ENCODE measurements at regions of chr18 and their contacts with region 1.

Region 1: DNA sequence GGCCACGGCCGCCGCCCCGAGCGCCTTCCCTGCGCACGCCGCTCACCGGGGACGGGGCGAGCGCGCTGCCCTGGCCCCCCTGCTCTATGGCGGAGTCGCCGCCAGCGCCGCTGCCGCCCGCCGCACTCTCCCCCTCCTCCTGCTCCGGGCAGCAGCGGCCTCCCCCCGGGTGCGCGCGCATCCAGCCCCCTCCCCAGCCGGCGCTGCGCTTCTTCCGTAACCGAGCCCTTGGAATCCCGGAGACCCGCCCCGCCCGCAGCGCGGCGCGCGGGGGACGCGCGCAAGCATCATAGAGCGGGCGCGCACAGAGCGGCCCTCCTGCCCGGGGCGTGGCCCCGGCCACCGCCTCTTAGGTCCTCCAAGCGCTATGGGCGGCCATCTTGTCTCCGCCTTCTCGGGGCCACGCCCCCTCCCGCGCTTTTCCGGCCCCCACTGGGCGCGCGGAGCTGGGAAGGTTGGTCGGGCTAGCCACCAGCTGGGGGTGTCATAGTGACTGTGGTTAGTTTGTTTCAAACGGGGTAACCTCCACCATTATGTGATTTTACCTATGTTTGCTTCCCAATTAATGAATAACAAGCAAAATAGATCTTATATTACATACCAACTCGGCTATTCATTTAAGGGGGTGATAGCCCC is at the start of gene MBD2:
- DNase-seq: peak; percentile 94
- H3K4me3 Mint-ChIP-seq: peak within 1 kb of the TSS; percentile 98
- H3K27ac Mint-ChIP-seq: peak within 1 kb of the TSS; percentile 98
- H3K4me1 Mint-ChIP-seq: peaks cover 43% of the 10 kb centered on the region
- H3K27me3 Mint-ChIP-seq: no peaks in the 10 kb centered on the region
- total RNA-seq, gene MBD2: 223 and 242 TPM in 2 replicates

Region 2: GRCh38 chr18:54173980-54174630 is 50.4 kb before region 1 on chr18:
- intact Hi-C with region 1: loop called (anchors 1 kb)
- DNase-seq: no peak
- H3K4me3 Mint-ChIP-seq: peak overlapping the region; percentile 49
- H3K27ac Mint-ChIP-seq: peak overlapping the region; percentile 96
- H3K4me1 Mint-ChIP-seq: peaks cover 69% of the 10 kb centered on the region
- H3K27me3 Mint-ChIP-seq: no peaks in the 10 kb centered on the region

Region 3: GRCh38 chr18:54209471-54210180 is 14.9 kb before region 1 on chr18:
- intact Hi-C with region 1: loop called (anchors 1 kb)
- DNase-seq: no peak
- H3K4me3 Mint-ChIP-seq: peak overlapping the region; percentile 5
- H3K27ac Mint-ChIP-seq: peak overlapping the region; percentile 85
- H3K4me1 Mint-ChIP-seq: peaks cover 70% of the 10 kb centered on the region
- H3K27me3 Mint-ChIP-seq: no peaks in the 10 kb centered on the region

Region 4: DNA sequence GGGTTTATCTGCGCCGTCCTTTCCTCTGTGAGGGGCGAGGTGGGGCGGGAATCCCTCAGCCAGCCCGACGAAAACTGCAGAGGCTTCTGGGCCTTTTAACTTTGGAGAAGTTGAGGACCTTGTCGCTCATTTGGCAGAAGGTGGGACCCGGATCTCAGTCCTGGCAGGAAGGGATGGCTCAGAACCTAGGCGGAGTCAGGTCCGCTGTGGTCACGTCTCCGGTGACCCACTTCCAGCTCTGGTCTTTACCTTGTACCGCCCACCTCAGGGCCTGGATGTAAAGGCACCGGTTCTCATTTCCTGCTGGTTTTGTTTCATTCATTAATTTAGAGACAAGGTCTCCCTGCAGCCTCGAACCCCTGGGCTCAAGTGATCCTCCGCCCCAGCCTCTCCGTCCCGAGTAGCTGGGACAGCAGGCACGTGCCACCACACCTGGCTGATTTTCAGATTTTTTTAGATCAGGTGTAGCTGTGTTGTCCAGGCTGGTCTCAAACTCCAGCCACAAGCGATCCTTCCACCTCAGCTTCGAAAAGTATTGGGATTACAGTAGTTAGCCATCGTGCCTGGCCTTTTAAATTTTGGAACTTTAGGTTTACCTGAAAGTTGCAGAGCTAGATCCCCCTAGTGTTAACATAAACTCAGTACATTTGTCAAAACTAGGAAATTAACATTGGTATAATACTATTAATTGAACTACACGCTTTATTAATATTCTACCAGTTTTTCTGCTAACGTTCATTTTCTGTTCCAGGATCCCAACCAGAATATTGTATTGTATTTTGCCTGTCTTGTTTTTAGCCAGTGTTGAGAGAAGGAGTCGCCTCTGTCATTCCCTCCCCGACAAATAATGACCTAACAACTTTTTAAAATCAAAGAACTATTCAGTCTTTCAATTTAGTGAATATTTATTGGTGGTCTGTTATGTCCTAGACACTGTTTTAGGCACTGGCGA is 45.7 kb after region 1 on chr18:
- intact Hi-C with region 1: loop called (anchors 1 kb)
- DNase-seq: peak; percentile 54
- H3K4me3 Mint-ChIP-seq: peak overlapping the region; percentile 81
- H3K27ac Mint-ChIP-seq: peak overlapping the region; percentile 96
- H3K4me1 Mint-ChIP-seq: peaks cover 44% of the 10 kb centered on the region
- H3K27me3 Mint-ChIP-seq: no peaks in the 10 kb centered on the region

Region 5: DNA sequence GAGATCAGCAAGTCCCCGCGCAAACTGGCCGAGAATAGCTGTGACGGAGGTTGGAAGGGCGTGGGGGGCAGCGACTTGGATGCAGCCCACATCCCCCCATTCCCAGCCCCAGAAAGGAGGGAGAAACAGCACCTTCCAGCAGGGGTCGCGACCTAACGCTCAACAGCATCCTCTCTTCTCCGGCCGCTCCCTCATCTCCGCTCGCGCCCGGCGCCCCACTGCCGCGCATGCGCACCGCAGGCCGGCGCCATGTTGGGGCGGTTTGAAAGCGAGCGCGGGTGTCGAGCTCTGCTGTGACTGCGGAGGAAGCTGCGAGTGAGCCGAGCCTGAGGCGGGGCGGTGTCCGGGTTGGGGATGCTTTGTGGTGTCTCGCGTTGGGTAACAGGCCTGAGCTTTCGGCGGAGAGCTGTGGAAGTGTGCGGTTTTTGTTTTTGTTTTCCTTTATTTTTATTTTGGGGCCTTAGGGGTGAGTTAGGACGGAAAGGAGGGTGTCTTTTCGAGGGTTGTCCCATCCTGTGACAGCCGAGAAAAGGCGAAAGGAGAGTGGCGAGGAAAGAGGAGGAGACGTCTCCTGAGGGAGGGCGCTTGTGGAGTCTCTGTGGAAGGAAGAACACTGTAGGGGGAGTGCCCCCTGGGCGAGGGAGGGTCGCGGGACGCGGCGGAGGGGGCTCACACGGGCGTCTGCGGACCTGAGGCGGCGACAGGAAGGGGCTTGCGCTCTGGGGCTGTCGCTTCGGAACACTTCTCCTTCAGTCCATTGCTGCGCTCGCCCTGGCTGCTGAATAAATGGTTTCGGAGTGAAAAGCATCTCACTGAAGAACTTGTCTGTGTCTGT is 133.4 kb after region 1 on chr18 and contains the starts of genes C18orf54 and STARD6:
- intact Hi-C with region 1: loop called (anchors 1 kb)
- DNase-seq: peak; percentile 93
- H3K4me3 Mint-ChIP-seq: peak within 1 kb of the TSS; percentile 98
- H3K27ac Mint-ChIP-seq: peak within 1 kb of the TSS; percentile 97
- H3K4me1 Mint-ChIP-seq: peaks cover 34% of the 10 kb centered on the region
- H3K27me3 Mint-ChIP-seq: no peaks in the 10 kb centered on the region
- total RNA-seq, gene C18orf54: 10.4 and 10.7 TPM in 2 replicates
- total RNA-seq, gene STARD6: 0.54 and 0.65 TPM in 2 replicates

Measured in activated T-helper 1 cell treated with anti-CD3 and anti-CD28 coated beads, Interleukin-12 subunit alpha, Interleukin-12 subunit beta, Interleukin-2, Interleukin-4 antibody, amounts not matched to agents 30 ng/mL and 10 ng/mL and 1 ng/mL, durations not matched to agents 14 hours and 24 hours and 36 hours (primary cell).